Activated B cell treated with CpG ODN at 0.5 μM for 24 hours (primary cell): ENCODE measurements at regions of chr12 and their contacts with region 1.

Region 1: DNA sequence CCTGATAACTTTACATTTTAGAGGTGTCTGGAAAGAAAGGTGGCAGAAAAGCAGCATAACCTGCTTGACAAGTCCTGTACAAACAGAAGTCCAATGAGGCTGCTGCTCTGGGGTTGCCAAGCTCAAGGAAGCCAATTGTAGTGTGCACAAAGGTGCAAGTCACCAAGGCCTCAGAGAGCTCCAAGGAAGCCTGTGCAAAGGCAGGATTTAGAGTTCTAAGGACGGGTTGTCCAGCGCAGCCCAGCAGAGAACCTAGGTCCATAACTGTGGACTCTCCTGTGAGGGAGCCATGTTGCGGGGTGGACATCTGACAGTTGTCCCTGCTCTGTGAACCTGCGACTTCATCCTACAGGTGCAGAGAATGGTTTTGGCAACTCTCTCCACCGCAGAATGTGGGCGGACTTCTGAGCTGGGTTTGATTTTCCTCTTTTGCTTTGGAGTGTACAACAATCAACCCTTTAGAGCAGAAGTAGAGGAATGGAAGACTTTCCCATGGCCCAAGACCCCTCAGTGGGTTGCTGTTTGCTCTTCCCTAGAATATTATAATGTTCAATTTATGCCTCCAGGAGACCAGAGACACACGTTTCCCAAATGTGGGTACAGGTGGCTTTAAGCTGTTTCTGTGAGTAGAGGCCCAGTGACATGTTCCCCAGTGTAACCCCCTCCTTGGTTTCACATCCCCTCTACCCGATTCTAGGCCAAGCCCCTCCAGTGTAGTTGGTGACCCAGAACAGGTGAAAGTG is 81.0 kb downstream of the ETV6 start:
- DNase-seq: peak; percentile 41
- ATAC-seq: peak; percentile 78
- H3K4me3 Mint-ChIP-seq: peak overlapping the region; percentile 74
- H3K27ac Mint-ChIP-seq: peak overlapping the region; percentile 89
- H3K4me1 Mint-ChIP-seq: peaks cover 96% of the 10 kb centered on the region
- H3K27me3 Mint-ChIP-seq: no peaks in the 10 kb centered on the region
- CTCF ChIP-seq: no peak

Region 2: DNA sequence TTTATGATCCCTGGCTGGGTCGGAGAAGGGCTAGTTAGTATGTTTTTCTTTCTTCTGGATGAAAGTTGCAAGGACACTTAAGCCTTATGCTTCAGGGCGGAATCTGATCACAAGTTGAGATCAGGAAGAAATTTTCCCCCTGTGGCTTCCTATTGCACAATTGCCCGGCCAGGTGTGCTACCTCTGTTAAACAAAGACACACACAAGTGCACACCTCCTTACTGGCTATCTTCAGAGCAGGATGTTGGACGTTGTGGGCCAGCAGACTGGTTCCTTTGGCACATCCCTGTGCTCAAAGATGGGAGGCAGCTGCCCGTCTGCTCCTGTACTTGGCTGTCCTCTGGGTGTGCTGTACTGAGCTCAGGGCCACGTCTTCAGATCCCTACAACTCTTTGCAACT is 61.9 kb before region 1 on chr12:
- CTCF ChIA-PET with region 1: no interaction called
- POLR2A ChIA-PET with region 1: no interaction called
- intact Hi-C with region 1: no loop called
- DNase-seq: no peak
- ATAC-seq: no peak
- H3K4me3 Mint-ChIP-seq: no peak overlapping the region
- H3K27ac Mint-ChIP-seq: no peak overlapping the region
- H3K4me1 Mint-ChIP-seq: peaks cover 81% of the 10 kb centered on the region
- H3K27me3 Mint-ChIP-seq: no peaks in the 10 kb centered on the region
- CTCF ChIP-seq: no peak

Region 3: GRCh38 chr12:11711651-11712327 is 18.7 kb before region 1 on chr12:
- CTCF ChIA-PET with region 1: no interaction called
- POLR2A ChIA-PET with region 1: interaction called, 13 read pairs
- intact Hi-C with region 1: loop called (anchors 2 kb)
- DNase-seq: no peak
- ATAC-seq: no peak
- H3K4me3 Mint-ChIP-seq: no peak overlapping the region
- H3K27ac Mint-ChIP-seq: no peak overlapping the region
- H3K4me1 Mint-ChIP-seq: peaks cover 35% of the 10 kb centered on the region
- H3K27me3 Mint-ChIP-seq: no peaks in the 10 kb centered on the region
- CTCF ChIP-seq: no peak

Region 4: DNA sequence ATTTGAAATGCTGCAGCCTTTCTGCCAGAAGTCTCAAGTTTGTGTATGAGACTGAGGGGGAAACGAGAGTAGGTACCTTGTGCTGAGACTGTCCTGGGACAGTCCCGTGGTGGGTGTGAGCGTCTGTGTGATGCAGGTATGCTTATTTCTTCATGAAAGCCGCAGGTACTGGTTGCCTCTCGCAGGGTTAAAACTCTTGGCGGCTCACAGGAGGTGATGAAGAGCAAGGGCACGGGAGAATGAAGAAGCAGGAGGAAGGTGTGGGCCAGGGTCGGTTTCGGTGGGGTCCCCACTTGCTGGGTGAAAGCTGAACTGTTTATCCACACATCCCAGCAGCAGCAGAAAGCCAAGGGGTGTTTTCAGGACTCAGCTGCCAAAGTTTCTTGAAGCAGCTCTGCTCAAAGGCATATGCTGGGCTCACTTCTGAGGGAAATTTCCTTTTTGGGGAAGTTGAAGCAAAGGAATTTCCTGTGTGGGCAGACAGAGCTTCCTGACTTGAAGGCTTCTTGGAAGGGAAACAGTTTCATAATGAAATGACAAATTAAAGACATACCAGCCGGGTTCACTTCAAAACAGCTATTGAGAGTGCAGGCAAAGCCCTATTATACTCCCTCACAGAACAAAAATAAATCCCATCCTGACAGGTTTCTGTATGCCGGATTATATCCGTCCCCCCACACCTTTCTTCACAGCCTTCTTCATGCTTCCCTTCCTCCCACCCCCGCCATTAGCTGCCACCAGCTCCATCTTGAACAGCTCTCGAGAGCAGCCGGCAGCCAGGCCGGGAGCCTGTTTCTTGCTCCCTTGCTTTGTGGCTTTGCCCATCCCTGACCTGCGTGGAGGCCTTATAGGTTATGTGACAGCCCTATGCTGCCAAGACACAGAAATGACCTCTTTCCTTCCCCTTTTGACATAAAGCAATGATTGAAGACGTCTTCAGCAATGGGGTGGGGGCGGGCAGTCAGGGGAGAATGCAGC is 35.6 kb after region 1 on chr12:
- CTCF ChIA-PET with region 1: interaction called, 4 read pairs
- POLR2A ChIA-PET with region 1: interaction called, 198 read pairs
- intact Hi-C with region 1: loop called (anchors 1 kb)
- DNase-seq: peak; percentile 48
- ATAC-seq: peak; percentile 84
- H3K4me3 Mint-ChIP-seq: peak overlapping the region; percentile 77
- H3K27ac Mint-ChIP-seq: peak overlapping the region; percentile 93
- H3K4me1 Mint-ChIP-seq: peaks cover 92% of the 10 kb centered on the region
- H3K27me3 Mint-ChIP-seq: no peaks in the 10 kb centered on the region
- CTCF ChIP-seq: no peak

Region 5: DNA sequence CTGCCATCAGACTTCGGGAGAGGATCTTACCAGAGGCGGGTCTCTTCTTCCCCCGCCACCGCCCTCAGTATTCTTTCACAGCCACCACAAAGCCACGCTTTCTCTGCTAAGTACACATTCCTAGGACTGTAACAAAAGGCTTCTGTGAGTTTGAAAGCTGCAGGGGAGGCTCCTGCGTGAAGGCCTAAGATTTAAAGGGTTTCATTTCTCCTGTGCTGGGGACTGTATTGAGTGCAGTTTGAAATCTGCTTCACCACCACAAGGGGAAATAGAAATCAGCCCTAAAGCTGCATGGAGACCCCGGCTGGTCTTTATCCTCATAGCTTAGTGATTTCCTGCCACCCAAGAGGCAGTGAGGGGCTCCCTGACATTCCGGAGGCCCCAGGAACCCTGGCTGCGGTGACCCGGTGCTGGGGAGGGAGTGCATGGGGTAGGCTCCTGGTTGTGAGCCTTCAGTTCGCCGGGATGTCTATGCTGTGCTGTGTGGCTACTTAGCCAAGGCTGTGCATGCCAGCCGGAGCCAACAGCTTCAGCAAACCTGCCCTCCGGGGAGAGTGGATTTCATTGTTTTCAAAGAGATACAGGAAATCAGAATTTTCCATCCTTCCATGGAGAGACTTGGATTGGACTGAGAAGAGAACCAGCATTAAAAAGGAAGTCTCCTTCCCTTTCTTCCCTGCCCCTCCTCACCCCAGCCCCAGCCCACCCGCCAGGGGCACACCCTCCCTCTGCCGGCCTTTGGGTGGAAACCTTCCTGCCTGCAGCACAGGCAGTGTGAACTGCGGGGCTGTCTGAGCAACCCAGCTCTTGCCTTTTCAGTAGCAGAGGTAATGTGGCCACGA is 82.3 kb after region 1 on chr12:
- CTCF ChIA-PET with region 1: interaction called, 7 read pairs
- POLR2A ChIA-PET with region 1: interaction called, 29 read pairs
- intact Hi-C with region 1: loop called (anchors 2 kb)
- DNase-seq: peak; percentile 32
- ATAC-seq: peak; percentile 83
- H3K4me3 Mint-ChIP-seq: peak overlapping the region; percentile 65
- H3K27ac Mint-ChIP-seq: peak overlapping the region; percentile 87
- H3K4me1 Mint-ChIP-seq: peaks cover 66% of the 10 kb centered on the region
- H3K27me3 Mint-ChIP-seq: no peaks in the 10 kb centered on the region
- CTCF ChIP-seq: no peak

Region 6: DNA sequence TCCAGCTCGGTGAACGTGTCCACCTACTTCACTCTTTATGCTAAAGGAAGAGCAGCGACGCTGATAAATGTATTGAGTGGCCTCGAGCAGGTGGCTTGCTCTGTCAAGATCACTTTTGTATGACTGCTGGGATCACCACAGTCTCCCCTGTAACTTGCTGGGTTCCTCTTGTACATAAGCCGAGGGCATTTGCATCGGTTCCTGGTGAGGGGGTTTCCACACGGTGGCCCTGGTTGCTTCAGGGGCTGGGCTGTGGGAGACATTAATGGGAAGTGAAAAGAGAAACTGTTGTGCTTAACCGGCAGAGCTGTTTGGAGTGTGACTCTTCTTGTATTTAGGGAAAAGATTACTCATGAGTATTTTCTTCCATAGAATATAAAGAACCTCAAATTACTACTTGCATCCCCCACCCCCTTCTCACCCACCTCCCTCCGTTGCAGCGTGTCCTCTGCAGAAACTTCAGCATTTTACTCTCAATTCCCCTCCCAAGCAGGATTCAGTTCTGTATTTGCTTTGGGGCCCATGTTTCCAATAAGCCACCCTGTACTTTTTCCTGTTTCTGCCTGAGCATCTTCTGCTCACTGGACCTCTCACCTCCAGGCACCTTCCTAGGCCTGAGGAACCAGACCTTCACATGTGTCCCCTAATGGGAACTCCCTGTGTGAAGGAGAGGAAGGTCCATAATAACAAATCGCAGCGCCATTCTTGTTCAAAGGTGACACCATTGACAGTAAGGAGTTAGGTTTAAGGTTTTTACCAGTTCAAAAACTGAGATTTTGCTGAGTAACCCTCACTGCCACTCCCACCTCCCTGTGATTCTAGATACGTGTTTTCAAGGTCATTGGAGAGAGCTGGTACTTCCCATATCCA is 106.0 kb after region 1 on chr12:
- CTCF ChIA-PET with region 1: no interaction called
- POLR2A ChIA-PET with region 1: interaction called, 31 read pairs
- intact Hi-C with region 1: loop called (anchors 1 kb)
- DNase-seq: peak; percentile 73
- ATAC-seq: peak; percentile 94
- H3K4me3 Mint-ChIP-seq: peak overlapping the region; percentile 73
- H3K27ac Mint-ChIP-seq: peak overlapping the region; percentile 95
- H3K4me1 Mint-ChIP-seq: peaks cover 81% of the 10 kb centered on the region
- H3K27me3 Mint-ChIP-seq: no peaks in the 10 kb centered on the region
- CTCF ChIP-seq: no peak

Region 7: DNA sequence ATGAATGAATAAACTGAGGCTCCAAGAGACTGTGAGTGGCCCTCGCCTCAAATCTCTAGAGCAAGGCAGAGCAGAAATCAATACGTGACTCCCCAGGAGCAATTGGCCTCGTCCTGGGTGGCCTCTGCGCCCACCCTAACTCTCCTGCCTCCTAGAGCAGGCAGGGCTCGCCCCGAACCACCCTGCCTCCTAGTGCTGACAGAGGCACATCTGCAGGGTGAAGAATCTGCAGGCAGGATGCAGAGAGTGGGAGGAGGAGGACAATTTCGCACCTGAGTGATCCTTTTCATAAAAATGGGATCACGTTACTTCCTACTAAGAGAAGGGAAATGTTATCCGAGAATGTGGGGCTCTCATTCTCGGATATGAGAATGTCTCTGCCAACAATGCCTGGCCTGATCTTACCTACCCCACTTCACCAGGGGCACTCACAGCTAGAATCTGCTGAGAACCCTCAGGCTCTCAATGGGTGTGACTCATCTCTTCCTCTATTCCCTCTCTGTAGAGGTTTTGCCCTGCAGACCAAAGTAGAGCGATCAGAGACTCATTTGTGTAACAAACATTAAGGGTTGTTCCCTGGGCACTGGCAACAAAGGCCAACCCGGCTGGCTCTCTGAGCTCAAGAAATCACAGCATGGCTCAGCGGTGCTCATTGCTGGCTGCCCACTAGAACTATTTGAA is 278.6 kb after region 1 on chr12:
- CTCF ChIA-PET with region 1: no interaction called
- POLR2A ChIA-PET with region 1: interaction called, 16 read pairs
- intact Hi-C with region 1: loop called (anchors 1 kb)
- DNase-seq: no peak
- ATAC-seq: peak; percentile 60
- H3K4me3 Mint-ChIP-seq: peak overlapping the region; percentile 78
- H3K27ac Mint-ChIP-seq: peak overlapping the region; percentile 81
- H3K4me1 Mint-ChIP-seq: peaks cover 60% of the 10 kb centered on the region
- H3K27me3 Mint-ChIP-seq: no peaks in the 10 kb centered on the region
- CTCF ChIP-seq: no peak

Region 8: DNA sequence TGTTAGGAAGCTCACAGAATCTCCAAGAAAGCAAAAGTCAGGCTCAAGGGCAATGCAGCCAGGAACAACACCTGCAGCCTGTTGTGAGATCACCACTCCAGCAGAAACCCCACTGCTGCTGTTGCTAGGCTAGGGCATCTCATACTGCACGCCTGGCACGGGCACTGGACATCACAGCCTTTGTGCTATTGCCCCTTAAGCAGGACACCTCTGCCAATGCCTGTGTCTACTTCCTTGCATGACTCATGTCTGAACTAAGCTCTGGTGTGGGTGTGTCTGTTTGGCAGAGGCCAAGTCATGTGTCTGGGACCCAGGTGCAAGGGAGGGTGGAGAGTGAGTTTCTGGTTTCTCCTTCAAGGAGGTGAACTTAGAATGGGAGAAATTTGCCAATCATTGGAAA is 1072.7 kb after region 1 on chr12:
- CTCF ChIA-PET with region 1: no interaction called
- POLR2A ChIA-PET with region 1: no interaction called
- intact Hi-C with region 1: loop called (anchors 10 kb)
- DNase-seq: no peak
- ATAC-seq: peak; percentile 70
- H3K4me3 Mint-ChIP-seq: peak overlapping the region; percentile 12
- H3K27ac Mint-ChIP-seq: peak overlapping the region; percentile 6
- H3K4me1 Mint-ChIP-seq: peaks cover 65% of the 10 kb centered on the region
- H3K27me3 Mint-ChIP-seq: no peaks in the 10 kb centered on the region
- CTCF ChIP-seq: no peak